HEK293 (cell line): ENCODE measurements at regions of chr2 and their contacts with region 1.

Region 1: DNA sequence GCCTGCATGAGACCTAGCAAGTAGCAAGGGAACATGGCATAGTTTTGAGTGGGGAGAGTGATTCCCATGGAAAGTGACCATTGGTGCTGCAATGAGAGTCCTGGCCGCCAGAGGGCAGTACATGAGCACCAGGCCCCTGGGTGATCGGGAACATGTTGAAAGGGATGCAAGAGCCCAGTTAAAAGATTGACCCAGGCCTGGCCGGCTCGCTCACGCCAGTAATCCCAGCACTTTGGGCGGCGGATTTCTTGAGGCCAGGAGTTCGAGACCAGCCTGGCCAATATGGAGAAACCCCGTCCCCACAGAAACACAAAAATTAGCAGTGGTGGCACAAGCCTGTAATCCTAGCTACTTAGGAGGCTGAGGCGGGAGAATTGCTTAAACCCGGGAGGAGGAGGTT is 22.2 kb downstream of the FAP start:
- H3K4me3 ChIP-seq: no peak overlapping the region
- H3K27ac ChIP-seq: no peak overlapping the region
- H3K4me1 ChIP-seq: peaks cover 3% of the 10 kb centered on the region; the same call in 1 of the 2 replicates
- CTCF ChIP-seq: 0 out of 2 replicates have a peak, but pooled peaks have one; percentile 42

Region 2: GRCh38 chr2:161842736-161843433 is 378.2 kb before region 1 on chr2:
- CTCF ChIA-PET with region 1: no interaction called
- POLR2A ChIA-PET with region 1: no interaction called
- H3K4me3 ChIP-seq: no peak overlapping the region
- H3K27ac ChIP-seq: no peak overlapping the region
- H3K4me1 ChIP-seq: no peaks in the 10 kb centered on the region
- CTCF ChIP-seq: no peak

Region 3: GRCh38 chr2:162153608-162154224 is 67.3 kb before region 1 on chr2:
- CTCF ChIA-PET with region 1: interaction called, 17 read pairs
- POLR2A ChIA-PET with region 1: no interaction called
- H3K4me3 ChIP-seq: no peak overlapping the region
- H3K27ac ChIP-seq: no peak overlapping the region
- H3K4me1 ChIP-seq: no peaks in the 10 kb centered on the region
- CTCF ChIP-seq: peak; percentile 30; the same call in 1 of the 2 replicates

Region 4: GRCh38 chr2:162204059-162204458 is 17.0 kb before region 1 on chr2:
- CTCF ChIA-PET with region 1: interaction called, 17 read pairs
- POLR2A ChIA-PET with region 1: no interaction called
- H3K4me3 ChIP-seq: no peak overlapping the region
- H3K27ac ChIP-seq: no peak overlapping the region
- H3K4me1 ChIP-seq: no peaks in the 10 kb centered on the region
- CTCF ChIP-seq: no peak

Region 5: GRCh38 chr2:162210385-162210784 is 10.7 kb before region 1 on chr2:
- CTCF ChIA-PET with region 1: interaction called, 17 read pairs
- POLR2A ChIA-PET with region 1: no interaction called
- H3K4me3 ChIP-seq: no peak overlapping the region
- H3K27ac ChIP-seq: no peak overlapping the region
- H3K4me1 ChIP-seq: no peaks in the 10 kb centered on the region
- CTCF ChIP-seq: no peak

Region 6: DNA sequence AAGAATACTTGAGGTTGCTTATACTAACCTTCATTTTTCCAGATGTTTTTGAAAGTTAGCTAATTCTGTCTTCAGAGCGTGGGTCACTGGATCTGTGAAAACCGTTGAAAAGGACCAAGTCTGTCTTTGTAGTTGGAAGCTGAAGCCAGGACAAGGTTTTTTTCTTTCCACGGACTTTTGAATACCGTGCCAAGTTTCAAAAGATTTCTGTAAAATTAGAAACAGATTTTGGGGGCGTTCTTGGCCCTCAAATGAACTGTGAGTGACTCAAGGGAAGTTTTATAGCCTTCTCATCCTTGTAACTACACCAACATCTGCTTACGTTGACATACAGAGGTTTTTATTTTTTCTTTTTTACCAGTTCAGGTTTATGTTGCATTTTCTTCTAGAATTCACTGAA is 22.2 kb after region 1 on chr2 and contains the start of gene FAP:
- CTCF ChIA-PET with region 1: interaction called, 11 read pairs
- POLR2A ChIA-PET with region 1: no interaction called
- H3K4me3 ChIP-seq: no peak within 1 kb of the TSS
- H3K27ac ChIP-seq: no peak within 1 kb of the TSS
- H3K4me1 ChIP-seq: no peaks in the 10 kb centered on the region
- CTCF ChIP-seq: no peak

Region 7: DNA sequence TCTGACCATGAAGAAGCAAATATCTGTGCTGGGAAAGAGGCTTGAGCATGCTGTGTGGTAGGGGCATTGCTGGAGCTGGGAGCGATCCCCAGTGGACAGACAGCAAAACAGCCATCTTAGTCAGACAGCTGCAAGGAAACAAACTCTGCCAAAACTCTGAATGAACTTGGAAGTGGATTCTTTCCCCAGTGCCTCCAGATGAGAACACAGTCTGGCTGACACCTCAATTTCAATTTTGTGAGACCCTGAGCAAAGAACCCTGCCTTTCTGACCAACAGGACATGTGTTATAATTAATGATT is 45.3 kb after region 1 on chr2:
- CTCF ChIA-PET with region 1: no interaction called
- POLR2A ChIA-PET with region 1: no interaction called
- H3K4me3 ChIP-seq: no peak overlapping the region
- H3K27ac ChIP-seq: no peak overlapping the region
- H3K4me1 ChIP-seq: no peaks in the 10 kb centered on the region
- CTCF ChIP-seq: no peak

Region 8: DNA sequence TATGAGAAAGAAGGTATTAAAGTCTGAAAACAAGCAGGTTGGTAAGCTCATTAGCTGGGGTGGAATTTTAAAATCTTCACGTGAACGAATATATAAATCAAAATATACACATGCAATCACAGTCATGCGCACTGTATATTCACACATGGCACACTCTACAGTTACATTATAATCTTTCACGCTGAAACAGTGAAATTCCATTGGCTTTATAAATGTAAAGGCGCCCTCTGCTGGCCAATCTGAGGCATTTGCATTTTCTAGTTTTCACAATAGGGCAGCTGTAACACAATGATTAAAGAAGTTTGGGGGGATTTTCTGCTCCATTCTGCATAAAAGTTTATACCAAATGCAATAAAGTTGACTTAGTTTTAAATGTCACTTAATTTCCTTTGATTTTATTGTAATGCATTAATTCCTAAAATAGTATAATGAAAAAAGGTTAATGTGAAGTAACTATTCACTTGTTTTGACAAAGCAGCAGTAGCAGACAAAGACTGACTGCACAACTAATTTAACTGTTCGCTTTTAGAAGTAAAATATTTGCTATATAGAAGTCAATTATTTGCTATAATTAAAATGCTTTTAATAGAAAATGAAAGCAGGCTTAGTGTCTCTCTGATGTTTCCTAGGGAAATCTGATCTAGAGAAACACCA is 80.2 kb after region 1 on chr2:
- CTCF ChIA-PET with region 1: interaction called, 130 read pairs
- POLR2A ChIA-PET with region 1: no interaction called
- H3K4me3 ChIP-seq: no peak overlapping the region
- H3K27ac ChIP-seq: no peak overlapping the region
- H3K4me1 ChIP-seq: no peaks in the 10 kb centered on the region
- CTCF ChIP-seq: 0 out of 2 replicates have a peak, but pooled peaks have one; percentile 10

Region 9: GRCh38 chr2:162312853-162313252 is 91.8 kb after region 1 on chr2:
- CTCF ChIA-PET with region 1: no interaction called
- POLR2A ChIA-PET with region 1: no interaction called
- H3K4me3 ChIP-seq: no peak overlapping the region
- H3K27ac ChIP-seq: no peak overlapping the region
- H3K4me1 ChIP-seq: no peaks in the 10 kb centered on the region
- CTCF ChIP-seq: no peak